ENCODE measurements at regions of chr1 and their contacts with region 1.

Region 1: DNA sequence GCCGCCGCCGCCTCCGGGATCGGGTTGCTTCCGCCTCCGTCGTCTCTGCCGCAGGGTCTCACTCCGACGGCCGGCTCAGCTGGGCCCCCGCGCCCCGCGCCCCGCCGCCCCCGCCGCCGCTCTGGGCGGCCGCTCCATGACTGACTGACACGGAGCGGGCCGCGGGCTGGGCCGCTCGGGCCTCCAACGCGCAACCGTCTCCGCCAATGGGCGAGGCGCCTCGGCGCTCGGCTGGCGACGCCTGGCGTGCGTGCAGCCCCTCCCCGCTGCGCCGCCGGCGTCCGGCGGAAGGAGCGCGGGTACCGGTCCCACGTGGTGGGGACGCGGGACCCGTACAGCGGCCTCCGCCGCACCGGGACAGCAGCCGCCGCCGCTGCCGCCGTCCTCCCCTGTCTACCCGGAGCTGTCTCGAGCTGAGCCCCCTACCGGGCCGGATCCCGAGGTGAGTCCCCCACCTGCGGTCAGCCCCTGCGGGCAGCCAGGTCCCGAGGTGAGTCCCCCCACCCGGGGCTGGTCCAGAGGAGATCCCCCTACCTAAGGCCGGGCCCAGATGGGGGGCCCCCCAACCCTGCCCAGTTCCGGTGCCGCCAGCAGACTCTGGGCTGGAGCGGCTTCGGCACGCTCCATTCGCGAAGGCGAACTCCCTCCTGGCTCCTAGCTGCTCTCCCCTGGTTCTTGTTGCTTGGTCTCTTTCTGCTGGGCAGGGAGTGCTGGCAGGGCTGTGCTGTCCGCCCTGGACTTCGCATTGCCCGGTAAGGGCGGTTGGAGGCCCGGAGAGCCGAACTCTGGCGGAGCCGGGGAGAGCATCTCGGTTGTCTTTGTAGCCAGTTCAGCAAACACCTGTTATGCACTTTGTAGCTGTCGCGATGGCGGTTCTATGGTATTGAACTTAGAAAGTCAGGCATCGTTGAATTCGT is at the starts of genes TAF5L and URB2:
- DNase-seq: peak; percentile 90
- ATAC-seq: peak; percentile 93
- H3K4me3 Mint-ChIP-seq: peak within 1 kb of the TSS; percentile 96
- H3K27ac Mint-ChIP-seq: peak within 1 kb of the TSS; percentile 95
- H3K4me1 Mint-ChIP-seq: peaks cover 46% of the 10 kb centered on the region
- H3K27me3 Mint-ChIP-seq: no peaks in the 10 kb centered on the region
- total RNA-seq, gene TAF5L: 24.9 to 29.7 TPM
- total RNA-seq, gene URB2: 13.5 to 18.7 TPM

Region 2: DNA sequence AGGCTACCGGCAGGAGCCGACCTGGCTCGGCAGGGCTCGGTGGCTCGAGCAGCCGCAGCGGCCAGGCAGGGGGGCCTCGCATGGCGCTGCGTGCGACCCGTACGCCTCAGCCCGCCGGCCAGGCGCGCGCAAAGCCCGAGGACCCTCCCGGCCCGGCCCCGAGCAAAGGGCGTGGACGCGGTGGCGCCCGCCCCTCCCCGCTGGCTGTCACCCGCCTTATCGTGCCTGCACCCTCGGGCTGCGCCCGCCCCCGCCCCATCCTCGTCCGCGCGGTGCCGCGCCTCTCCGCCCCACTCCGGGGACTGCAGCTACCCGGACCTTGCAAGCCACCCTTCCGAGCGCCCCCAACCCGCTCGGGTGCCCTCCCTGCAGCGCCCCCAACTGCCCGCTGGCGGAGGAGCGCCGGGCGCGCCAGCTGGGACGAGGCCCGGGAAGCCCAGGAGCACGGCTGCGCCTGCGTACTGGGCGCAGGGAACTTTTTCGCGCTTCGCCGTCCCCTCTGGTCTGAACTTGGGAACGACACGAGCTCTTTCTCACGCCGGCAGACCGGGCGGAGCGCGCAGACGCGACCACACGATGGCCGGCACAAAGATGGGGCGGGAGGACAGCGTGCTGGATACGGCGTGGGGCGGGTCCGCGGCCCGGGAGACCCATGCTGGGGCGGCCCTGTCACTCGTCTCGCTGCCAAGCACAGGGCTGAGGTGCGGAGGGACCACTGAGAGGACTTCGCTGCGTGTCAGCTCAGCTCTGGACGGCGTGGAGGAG is 67.4 kb before region 1 on chr1 and contains the start of gene ABCB10:
- CTCF ChIA-PET with region 1: interaction called, 19 read pairs
- DNase-seq: peak; percentile 90
- ATAC-seq: peak; percentile 84
- H3K4me3 Mint-ChIP-seq: peak within 1 kb of the TSS; percentile 87
- H3K27ac Mint-ChIP-seq: peak within 1 kb of the TSS; percentile 91
- H3K4me1 Mint-ChIP-seq: peaks cover 35% of the 10 kb centered on the region
- H3K27me3 Mint-ChIP-seq: no peaks in the 10 kb centered on the region
- total RNA-seq, gene ABCB10: 35.0 to 39.8 TPM

Measured in activated CD8-positive, alpha-beta memory T cell treated with anti-CD3 and anti-CD28 coated beads, Interleukin-2, amount 10 ng/mL, durations not matched to agents 7 days and 5 days (primary cell).